ENCODE measurements at regions of chr12 and their contacts with region 1.

Region 1: GRCh38 chr12:1517007-1517406 is 77.4 kb downstream of the FBXL14 start:
- DNase-seq: peak in 1 of 2 experiments; percentile 77
- H3K4me3 ChIP-seq: no peak overlapping the region
- H3K27ac ChIP-seq: no peak overlapping the region
- H3K4me1 ChIP-seq: peaks cover 28% of the 10 kb centered on the region
- H3K27me3 ChIP-seq: no peaks in the 10 kb centered on the region
- CTCF ChIP-seq: peak; percentile 51; the same call in 1 of the 2 replicates

Region 2: GRCh38 chr12:1130164-1130563 is 386.8 kb before region 1 on chr12:
- CTCF ChIA-PET with region 1: no interaction called
- POLR2A ChIA-PET with region 1: interaction called, 3 read pairs
- intact Hi-C with region 1: loop called (anchors 5 kb)
- DNase-seq: peak; percentile 74 to 98
- H3K4me3 ChIP-seq: peak overlapping the region; percentile 13; the same call in 1 of the 2 replicates
- H3K27ac ChIP-seq: peak overlapping the region; percentile 69
- H3K4me1 ChIP-seq: peaks cover 34% of the 10 kb centered on the region
- H3K27me3 ChIP-seq: no peaks in the 10 kb centered on the region
- CTCF ChIP-seq: no peak

Region 3: DNA sequence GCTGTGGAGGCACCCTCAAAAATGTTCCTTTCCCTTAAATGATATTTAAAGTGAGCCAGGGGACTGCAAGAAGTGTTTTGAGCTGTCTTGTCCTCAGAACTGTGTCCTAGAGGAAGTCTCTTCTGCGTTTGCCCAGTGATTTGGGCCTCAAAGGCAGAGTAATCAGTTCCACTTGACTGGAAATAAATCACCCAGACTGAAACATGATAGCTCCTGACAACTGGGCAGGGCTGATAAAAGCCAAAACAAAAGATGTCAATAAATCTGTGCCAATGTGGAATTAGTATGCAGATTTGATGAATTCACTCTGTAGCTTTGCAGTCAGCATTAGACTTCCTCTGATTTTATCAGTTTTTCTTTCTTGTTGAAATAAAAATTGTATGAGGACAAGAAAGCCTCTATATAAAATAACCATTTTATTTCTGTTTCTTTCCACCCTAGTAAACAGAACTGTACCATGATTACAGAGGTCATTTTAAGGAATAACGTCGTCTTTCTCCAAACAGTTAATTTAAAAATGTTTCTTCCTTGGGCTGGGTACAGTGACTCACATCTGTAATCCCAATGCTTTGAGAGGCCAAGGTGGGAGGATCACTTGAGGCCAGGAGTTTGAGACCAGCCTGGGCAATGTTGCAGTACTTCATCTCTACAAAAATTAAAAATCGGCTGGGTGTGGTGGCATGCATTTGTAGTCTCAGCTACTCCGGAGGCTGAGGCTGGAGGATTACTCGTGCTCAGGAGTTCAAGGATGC is 345.2 kb before region 1 on chr12:
- CTCF ChIA-PET with region 1: no interaction called
- POLR2A ChIA-PET with region 1: no interaction called
- intact Hi-C with region 1: loop called (anchors 1 kb)
- DNase-seq: peak; percentile 47 to 81
- H3K4me3 ChIP-seq: no peak overlapping the region
- H3K27ac ChIP-seq: peak overlapping the region; percentile 23; the same call in 1 of the 2 replicates
- H3K4me1 ChIP-seq: peaks cover 20% of the 10 kb centered on the region
- H3K27me3 ChIP-seq: no peaks in the 10 kb centered on the region
- CTCF ChIP-seq: no peak

Region 4: GRCh38 chr12:1217191-1217949 is 299.6 kb before region 1 on chr12:
- CTCF ChIA-PET with region 1: no interaction called
- POLR2A ChIA-PET with region 1: no interaction called
- intact Hi-C with region 1: loop called (anchors 1 kb)
- DNase-seq: peak; percentile 33 to 95
- H3K4me3 ChIP-seq: peak overlapping the region; percentile 41
- H3K27ac ChIP-seq: peak overlapping the region; percentile 83
- H3K4me1 ChIP-seq: peaks cover 50% of the 10 kb centered on the region
- H3K27me3 ChIP-seq: no peaks in the 10 kb centered on the region
- CTCF ChIP-seq: no peak

Region 5: DNA sequence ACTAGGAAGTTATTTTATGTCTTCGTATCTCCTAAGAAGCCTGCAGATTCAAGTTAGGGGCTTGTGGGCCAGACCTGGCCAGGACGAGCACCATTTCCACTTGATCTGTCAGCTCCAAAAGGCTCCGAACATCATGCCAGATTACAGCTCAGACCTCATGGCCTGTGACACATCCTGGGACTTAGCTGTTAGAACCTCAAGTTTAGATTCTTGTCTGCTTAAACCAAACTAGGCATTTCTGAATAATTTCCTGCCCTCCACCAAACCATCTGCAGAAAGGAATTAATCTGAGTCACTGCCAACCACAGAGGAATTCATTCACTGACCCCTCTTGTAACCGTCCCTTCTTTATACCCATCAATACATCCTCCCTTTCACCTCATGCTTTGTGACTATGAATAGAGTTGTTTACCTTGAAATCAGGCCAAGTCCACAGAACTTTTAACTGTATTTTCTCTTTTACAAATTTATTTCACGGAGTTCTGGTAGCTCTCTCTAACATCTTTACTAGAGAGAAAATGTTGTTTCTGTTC is 42.9 kb before region 1 on chr12:
- CTCF ChIA-PET with region 1: no interaction called
- POLR2A ChIA-PET with region 1: interaction called, 10 read pairs
- intact Hi-C with region 1: loop called (anchors 1 kb)
- DNase-seq: peak; percentile 55 to 80
- H3K4me3 ChIP-seq: no peak overlapping the region
- H3K27ac ChIP-seq: peak overlapping the region; percentile 33
- H3K4me1 ChIP-seq: peaks cover 34% of the 10 kb centered on the region
- H3K27me3 ChIP-seq: no peaks in the 10 kb centered on the region
- CTCF ChIP-seq: no peak

Region 6: DNA sequence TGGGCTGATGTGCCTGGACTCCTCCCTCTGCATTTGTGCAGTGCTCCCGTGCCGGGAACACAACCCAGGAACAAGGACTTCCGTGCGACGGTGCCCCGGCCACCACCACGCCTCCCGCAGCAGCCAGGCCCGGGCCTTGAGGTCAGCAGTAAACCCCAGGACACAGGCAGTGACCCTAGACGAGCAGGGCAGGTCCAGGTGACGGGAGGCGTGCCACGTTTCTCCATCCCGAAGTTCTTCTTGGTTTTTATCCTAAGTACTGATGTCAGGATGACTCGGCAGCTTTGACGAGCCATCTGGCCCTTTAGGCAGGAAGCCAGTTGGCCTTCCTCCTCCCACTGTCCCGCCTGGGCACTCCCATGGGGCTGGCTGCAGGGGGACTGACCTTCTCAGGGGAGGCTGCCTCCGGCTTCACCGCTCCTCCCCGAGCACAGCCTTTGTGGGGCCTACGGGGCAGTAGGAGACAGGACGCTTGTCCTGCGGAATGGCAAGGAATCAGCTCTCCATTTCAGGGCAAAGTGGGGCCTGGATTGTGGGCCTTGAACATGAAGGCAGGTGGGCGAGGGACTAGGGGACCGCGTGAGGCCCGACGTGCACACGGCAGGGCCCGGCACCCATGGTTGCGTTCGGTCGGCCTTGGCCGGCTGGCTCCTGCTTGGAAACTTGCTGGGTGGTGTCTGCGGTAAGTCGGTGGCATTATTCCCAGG is 16.8 kb before region 1 on chr12:
- CTCF ChIA-PET with region 1: no interaction called
- POLR2A ChIA-PET with region 1: interaction called, 6 read pairs
- intact Hi-C with region 1: loop called (anchors 1 kb)
- DNase-seq: peak; percentile 53 to 95
- H3K4me3 ChIP-seq: no peak overlapping the region
- H3K27ac ChIP-seq: peak overlapping the region; percentile 56
- H3K4me1 ChIP-seq: peaks cover 14% of the 10 kb centered on the region
- H3K27me3 ChIP-seq: no peaks in the 10 kb centered on the region
- CTCF ChIP-seq: no peak

Region 7: DNA sequence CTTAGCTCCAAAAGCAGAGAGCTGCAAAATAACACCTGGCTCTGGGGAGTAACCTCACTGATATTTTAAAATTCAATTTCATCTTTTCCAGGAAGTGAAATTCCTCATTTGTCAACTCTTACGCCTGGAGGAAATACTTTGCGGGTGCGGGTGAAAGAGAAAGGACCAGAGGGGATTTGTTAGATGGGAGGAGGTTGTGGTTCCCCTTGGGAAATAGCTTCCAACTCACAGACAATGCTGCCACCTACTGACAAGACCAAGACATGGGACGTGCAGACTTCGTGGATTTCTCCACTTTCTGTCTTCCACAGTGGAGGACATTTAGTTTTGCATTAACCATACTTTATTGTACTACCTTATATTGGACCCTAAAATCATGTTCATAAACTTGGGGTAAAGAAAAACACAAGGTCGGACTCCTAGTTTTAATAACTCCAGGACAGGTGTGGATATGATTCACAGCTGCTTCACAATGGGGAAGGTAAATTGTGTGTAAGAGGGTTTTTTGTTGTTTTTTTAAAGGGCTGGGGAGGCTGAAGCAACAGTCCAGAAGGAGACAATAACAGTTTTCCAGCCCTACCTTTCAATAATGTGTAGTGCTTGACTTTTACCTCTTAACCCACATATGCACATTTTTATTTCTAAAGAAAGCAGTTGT is 66.5 kb after region 1 on chr12:
- CTCF ChIA-PET with region 1: interaction called, 6 read pairs
- POLR2A ChIA-PET with region 1: no interaction called
- intact Hi-C with region 1: loop called (anchors 5 kb)
- DNase-seq: peak; percentile 73 to 77
- H3K4me3 ChIP-seq: peak overlapping the region; percentile 32; the same call in 1 of the 2 replicates
- H3K27ac ChIP-seq: no peak overlapping the region
- H3K4me1 ChIP-seq: peaks cover 6% of the 10 kb centered on the region
- H3K27me3 ChIP-seq: no peaks in the 10 kb centered on the region
- CTCF ChIP-seq: peak; percentile 98

Region 8: DNA sequence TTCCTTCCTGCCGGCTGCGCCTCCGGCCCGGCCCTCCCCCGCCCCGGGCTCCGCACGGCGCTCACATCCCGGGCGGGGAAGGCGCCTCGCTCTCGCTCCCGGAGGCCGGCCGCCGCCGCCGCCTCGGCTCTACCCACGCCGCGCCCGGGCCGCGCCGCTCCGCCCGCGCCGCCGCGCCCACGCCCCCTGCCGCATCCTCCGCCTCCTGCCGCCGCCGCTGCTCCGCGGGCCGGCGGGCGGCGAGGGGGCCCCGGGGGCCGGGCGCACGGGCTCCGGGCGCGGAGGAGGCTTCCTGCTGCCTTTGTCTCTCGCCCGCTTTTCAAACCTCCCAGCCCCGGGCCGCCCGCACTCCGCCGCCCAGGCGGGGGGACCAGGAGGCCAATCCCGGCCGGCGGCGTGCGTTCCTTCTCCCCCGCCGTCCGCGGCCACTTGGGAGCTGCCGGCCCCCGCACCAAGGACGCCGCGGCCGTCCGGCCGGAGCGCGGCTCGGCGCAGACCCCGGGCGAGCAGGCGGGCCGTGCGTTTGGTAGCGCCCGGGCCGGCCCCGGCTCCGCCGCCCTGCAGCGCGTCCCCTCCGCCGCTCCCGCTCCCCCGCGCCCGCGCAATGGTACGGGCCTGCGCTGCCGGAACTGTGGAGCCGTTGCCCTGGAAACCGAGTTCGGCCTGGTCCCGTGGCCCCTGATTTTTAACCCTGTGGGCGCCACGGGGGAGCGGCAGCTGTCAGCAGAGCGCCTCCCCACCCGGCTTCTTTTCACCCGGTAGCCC is 77.4 kb after region 1 on chr12 and contains the start of gene FBXL14:
- CTCF ChIA-PET with region 1: no interaction called
- POLR2A ChIA-PET with region 1: no interaction called
- intact Hi-C with region 1: no loop called
- DNase-seq: peak; percentile 65 to 90
- H3K4me3 ChIP-seq: peak within 1 kb of the TSS; percentile 91
- H3K27ac ChIP-seq: peak within 1 kb of the TSS; percentile 20; the same call in 1 of the 2 replicates
- H3K4me1 ChIP-seq: peaks cover 44% of the 10 kb centered on the region
- H3K27me3 ChIP-seq: no peaks in the 10 kb centered on the region
- CTCF ChIP-seq: no peak
- total RNA-seq, gene FBXL14: 16.3 and 21.1 TPM in 2 replicates

Region 9: DNA sequence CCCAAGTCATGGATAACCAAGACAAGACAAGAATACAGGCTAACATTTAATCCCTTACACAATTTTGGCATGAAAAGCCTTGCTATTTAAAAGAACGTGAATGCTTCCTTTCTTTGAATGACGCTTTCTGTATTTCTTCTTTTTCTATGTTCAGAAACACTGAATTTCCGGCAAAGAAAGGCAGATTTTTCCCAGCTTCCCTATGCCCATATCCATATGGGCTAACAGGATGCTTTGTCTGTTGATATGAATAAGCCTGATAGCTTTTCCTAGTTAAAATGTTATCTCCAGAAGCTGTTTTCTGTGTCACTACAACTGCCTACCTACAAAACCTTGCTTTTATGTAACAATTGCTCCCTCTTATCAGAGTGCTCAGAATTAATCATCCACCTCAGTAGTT is 439.7 kb after region 1 on chr12:
- CTCF ChIA-PET with region 1: no interaction called
- POLR2A ChIA-PET with region 1: no interaction called
- intact Hi-C with region 1: no loop called
- DNase-seq: no peak
- H3K4me3 ChIP-seq: no peak overlapping the region
- H3K27ac ChIP-seq: no peak overlapping the region
- H3K4me1 ChIP-seq: no peaks in the 10 kb centered on the region
- H3K27me3 ChIP-seq: peaks cover 22% of the 10 kb centered on the region
- CTCF ChIP-seq: no peak

Measured in PC-9 (cell line).